ENCODE measurements at regions of chr5 and their contacts with region 1.

Region 1: DNA sequence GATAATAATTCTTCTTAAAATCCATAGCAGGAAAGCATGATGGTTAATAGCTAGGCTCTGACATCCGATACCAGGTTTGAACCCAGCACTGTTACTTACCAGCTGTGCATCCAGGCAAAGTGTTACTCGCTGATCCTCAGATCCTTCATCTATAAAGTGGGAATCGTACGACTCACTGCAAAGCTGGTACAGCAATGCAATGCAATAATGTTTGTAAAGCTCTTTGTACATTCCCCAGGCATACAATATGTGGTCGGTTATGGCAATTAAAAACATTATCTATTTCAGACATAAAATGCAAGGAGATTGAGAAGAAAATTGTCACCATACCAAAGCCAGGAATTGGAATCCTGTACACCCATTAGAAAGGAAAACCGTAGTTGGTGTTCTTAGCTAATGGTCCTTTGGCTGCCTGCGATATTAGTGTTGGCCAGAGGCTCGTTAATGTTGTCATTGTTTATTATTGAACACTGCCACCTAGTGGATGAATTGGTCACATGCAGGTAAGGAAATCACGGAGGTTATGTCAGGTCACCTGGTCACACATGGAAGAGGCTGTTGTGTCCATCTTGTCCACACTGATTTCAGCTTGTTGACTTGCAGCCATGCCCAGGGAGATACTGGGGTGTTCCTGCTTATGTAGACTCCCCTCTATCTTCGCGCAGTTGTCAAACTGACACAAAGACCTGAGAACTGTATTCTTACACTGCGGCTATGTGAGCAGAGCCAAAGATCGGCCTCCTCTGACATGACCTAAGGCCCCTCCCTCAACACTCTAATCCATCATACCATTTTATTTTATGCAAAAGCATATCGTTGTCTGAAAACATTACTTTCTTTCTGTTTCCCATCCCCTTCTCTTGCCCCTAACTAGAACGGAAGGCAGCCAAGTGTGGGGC is 87.5 kb upstream of the PPP2R2B start:
- DNase-seq: peak; percentile 5 to 68 (median 44)
- ATAC-seq: peak; percentile 87
- H3K4me3 ChIP-seq: no peak overlapping the region
- H3K4me3 Mint-ChIP-seq: no peak overlapping the region
- H3K27ac ChIP-seq: no peak overlapping the region
- H3K27ac Mint-ChIP-seq: peak overlapping the region in 1 of 9 donors; percentile 26
- H3K4me1 ChIP-seq: no peaks in the 10 kb centered on the region
- H3K4me1 Mint-ChIP-seq: no peaks in the 10 kb centered on the region
- H3K27me3 ChIP-seq: no peaks in the 10 kb centered on the region
- H3K27me3 Mint-ChIP-seq: peaks cover 0 to 4% (median 0%) of the 10 kb centered on the region in 5 donors

Region 2: DNA sequence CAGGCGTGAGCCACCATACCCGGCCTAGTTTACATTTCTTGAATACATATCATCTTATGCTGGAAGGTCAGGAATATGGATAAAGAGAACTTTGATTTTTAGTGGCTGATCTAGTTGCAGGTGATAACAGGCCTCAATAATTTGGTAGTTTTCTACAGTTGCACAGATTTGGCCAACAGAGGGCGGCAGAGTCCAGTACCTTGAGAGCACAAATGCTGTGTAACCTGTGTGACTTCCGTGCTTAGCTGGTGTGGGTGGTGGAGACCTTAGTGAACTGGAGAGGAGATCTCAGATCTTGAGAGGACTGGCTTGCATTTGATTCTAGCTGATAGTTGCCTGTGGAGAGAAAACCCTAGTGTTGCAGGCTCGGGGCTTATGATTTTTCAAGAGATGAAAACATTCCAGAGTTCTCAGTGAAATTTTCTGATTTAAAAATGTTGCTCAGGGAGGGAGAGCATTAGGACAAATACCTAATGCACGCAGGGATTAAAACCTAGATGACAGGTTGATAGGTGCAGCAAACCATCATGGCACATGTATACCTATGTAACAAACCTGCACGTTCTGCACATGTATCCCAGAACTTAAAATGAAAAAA is 432.7 kb before region 1 on chr5:
- CTCF ChIA-PET with region 1: interaction called, 21 read pairs
- POLR2A ChIA-PET with region 1: no interaction called
- intact Hi-C with region 1: loop called (anchors 1 kb)
- DNase-seq: peak; percentile 24 to 72 (median 62)
- ATAC-seq: peak; percentile 91
- H3K4me3 ChIP-seq: no peak overlapping the region
- H3K4me3 Mint-ChIP-seq: no peak overlapping the region
- H3K27ac ChIP-seq: no peak overlapping the region
- H3K27ac Mint-ChIP-seq: peak overlapping the region in 3 of 9 donors; percentile 0 to 23 (median 6)
- H3K4me1 ChIP-seq: no peaks in the 10 kb centered on the region
- H3K4me1 Mint-ChIP-seq: peaks cover 4 to 10% (median 5%) of the 10 kb centered on the region in 7 donors
- H3K27me3 ChIP-seq: no peaks in the 10 kb centered on the region
- H3K27me3 Mint-ChIP-seq: peaks cover 0 to 5% (median 0%) of the 10 kb centered on the region in 5 donors

Region 3: DNA sequence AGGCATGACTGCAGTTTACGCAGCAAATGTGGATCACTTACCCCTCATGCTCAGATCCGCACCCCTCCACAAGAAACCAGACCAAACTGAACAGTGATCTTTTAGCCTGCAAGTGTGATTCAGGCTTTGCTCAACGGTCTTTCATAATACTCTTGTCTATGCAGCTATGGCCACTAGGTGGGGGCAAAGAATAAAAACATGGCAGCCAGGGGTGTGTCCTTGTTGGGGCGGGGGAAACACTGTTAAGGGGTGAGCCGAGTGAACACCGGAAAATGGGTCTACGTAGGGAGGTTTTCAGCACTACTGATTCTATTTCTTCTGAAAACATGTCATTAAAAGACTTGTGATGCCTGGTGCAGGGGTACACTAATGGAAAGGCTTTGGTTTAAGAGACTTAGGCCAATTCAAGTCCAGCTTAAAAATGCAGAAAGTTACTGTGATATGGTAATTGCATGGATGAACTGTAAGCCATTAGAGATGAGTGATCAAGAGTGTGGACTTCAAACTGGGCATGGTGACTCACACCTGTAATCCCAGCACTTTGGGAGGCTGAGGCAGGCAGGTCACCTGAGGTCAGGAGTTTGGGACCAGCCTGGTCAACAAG is 400.1 kb before region 1 on chr5:
- CTCF ChIA-PET with region 1: interaction called, 5 read pairs
- POLR2A ChIA-PET with region 1: no interaction called
- intact Hi-C with region 1: loop called (anchors 1 kb)
- DNase-seq: peak in 8 of 9 donors; percentile 23 to 58 (median 40)
- ATAC-seq: peak; percentile 94
- H3K4me3 ChIP-seq: no peak overlapping the region
- H3K4me3 Mint-ChIP-seq: peak overlapping the region in 2 of 10 donors; percentile 22 to 47
- H3K27ac ChIP-seq: no peak overlapping the region
- H3K27ac Mint-ChIP-seq: peak overlapping the region in 1 of 9 donors; percentile 23
- H3K4me1 ChIP-seq: no peaks in the 10 kb centered on the region
- H3K4me1 Mint-ChIP-seq: peaks cover 0 to 6% (median 0%) of the 10 kb centered on the region in 7 donors
- H3K27me3 ChIP-seq: no peaks in the 10 kb centered on the region
- H3K27me3 Mint-ChIP-seq: peaks cover 0 to 2% (median 0%) of the 10 kb centered on the region in 5 donors

Region 4: GRCh38 chr5:146878476-146879172 is 87.4 kb before region 1 on chr5 and contains the start of gene PPP2R2B:
- CTCF ChIA-PET with region 1: no interaction called
- POLR2A ChIA-PET with region 1: no interaction called
- intact Hi-C with region 1: no loop called
- DNase-seq: peak in 7 of 9 donors; percentile 7 to 35 (median 18)
- ATAC-seq: peak; percentile 81
- H3K4me3 ChIP-seq: peak within 1 kb of the TSS; percentile 78
- H3K4me3 Mint-ChIP-seq: peak within 1 kb of the TSS; percentile 84 to 92 (median 88)
- H3K27ac ChIP-seq: no peak within 1 kb of the TSS
- H3K27ac Mint-ChIP-seq: peak within 1 kb of the TSS in 1 of 9 donors; percentile 49
- H3K4me1 ChIP-seq: peaks cover 4 to 14% of the 10 kb centered on the region in 2 donors
- H3K4me1 Mint-ChIP-seq: peaks cover 3 to 20% (median 9%) of the 10 kb centered on the region in 7 donors
- H3K27me3 ChIP-seq: no peaks in the 10 kb centered on the region
- H3K27me3 Mint-ChIP-seq: peaks cover 0 to 61% (median 22%) of the 10 kb centered on the region in 5 donors
- total RNA-seq, gene PPP2R2B: 0.24 to 14.1 (median 1.00) TPM

Region 5: DNA sequence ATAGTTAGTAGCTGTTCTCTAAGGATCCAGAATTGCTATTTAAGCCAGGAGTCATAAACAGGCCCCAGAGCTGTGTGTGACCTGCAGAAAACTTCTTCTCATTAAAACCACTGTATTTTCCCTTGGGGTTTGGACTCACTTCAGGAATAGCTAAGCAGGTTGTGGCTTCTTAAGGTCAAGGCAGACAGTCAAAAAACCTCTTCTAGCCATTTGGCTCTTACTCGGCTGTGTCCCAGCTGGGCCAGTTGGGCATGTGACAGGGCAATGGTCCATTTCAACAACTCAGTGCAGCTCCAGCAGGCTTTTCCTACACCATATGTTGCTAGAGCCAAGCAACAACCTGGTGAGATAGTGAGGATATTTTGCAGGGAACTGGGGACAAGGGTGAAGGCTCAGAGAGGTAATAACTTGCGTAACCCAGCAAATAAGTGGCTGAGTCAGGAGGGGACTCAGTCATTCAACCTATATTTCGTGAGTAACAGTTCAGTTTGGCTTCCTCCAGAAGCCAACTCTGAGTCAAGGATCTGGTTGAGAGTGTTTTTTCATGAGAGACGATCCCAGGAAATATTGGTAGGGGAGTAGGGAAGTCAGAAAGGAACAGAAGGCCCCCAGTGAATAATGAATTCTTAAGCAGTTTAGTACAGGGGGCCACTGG is 28.0 kb after region 1 on chr5:
- CTCF ChIA-PET with region 1: no interaction called
- POLR2A ChIA-PET with region 1: no interaction called
- intact Hi-C with region 1: no loop called
- DNase-seq: no peak
- ATAC-seq: no peak
- H3K4me3 ChIP-seq: no peak overlapping the region
- H3K4me3 Mint-ChIP-seq: no peak overlapping the region
- H3K27ac ChIP-seq: no peak overlapping the region
- H3K27ac Mint-ChIP-seq: no peak overlapping the region
- H3K4me1 ChIP-seq: no peaks in the 10 kb centered on the region
- H3K4me1 Mint-ChIP-seq: no peaks in the 10 kb centered on the region
- H3K27me3 ChIP-seq: no peaks in the 10 kb centered on the region
- H3K27me3 Mint-ChIP-seq: peaks cover 0 to 9% (median 4%) of the 10 kb centered on the region in 5 donors

Region 6: DNA sequence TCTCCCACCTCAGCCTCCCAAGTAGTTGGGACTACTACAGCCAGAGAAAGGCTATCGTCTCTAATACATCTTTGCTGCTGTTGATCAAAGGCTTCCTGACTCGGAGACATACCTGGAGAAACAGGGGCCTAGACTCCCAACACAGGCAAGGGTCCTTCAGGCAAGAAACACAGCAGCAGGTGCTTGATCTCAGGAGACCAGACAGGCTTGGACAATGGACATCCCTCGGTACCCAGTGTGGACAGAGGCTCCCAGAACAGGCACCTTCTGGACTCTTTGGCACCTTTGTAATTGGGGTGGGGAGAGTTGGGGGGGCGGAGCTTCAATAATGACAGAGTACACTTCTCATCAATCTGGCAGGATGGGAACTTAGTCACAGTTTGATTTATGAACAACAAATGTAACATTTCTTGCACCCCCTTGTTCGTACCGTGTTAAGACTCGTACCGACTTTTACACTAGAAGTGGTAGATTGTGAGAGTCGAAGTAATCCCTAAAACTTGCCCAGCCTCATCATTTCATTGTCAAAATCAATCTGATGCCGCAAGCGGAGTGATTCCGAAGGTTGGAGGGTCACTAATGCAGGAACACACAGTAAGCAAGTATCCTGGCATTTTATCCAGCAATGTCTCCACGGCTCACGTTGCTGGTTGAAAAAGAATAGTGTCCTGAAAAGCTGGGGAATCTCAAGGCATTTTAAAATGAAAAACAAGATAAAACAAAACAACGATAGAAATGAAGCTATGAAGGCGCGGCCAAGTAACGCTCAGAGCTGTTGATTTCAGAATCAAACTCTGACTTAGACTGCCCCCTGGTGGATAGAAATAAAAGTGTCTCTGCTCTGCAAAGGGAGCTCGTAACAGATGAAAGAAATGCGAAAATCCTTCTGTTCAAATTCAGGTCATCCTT is 222.4 kb after region 1 on chr5:
- CTCF ChIA-PET with region 1: interaction called, 3 read pairs
- POLR2A ChIA-PET with region 1: no interaction called
- intact Hi-C with region 1: loop called in 1 of 2 experiments (anchors 1 kb)
- DNase-seq: peak in 7 of 9 donors; percentile 32 to 63 (median 50)
- ATAC-seq: peak; percentile 79
- H3K4me3 ChIP-seq: no peak overlapping the region
- H3K4me3 Mint-ChIP-seq: peak overlapping the region in 4 of 10 donors; percentile 27 to 58 (median 41)
- H3K27ac ChIP-seq: no peak overlapping the region
- H3K27ac Mint-ChIP-seq: peak overlapping the region in 1 of 9 donors; percentile 15
- H3K4me1 ChIP-seq: no peaks in the 10 kb centered on the region
- H3K4me1 Mint-ChIP-seq: peaks cover 0 to 8% (median 5%) of the 10 kb centered on the region in 7 donors
- H3K27me3 ChIP-seq: no peaks in the 10 kb centered on the region
- H3K27me3 Mint-ChIP-seq: peaks cover 5 to 15% (median 8%) of the 10 kb centered on the region in 5 donors